Caco-2 (cell line): ENCODE measurements at regions of chr22 and their contacts with region 1.

Region 1: GRCh38 chr22:35840302-35840739 is 122.6 kb downstream of the APOL5 start:
- DNase-seq: peak; percentile 88 to 95
- H3K4me3 ChIP-seq: peak overlapping the region; percentile 50
- H3K4me3 Mint-ChIP-seq: peak overlapping the region; percentile 90
- H3K27ac Mint-ChIP-seq: peak overlapping the region; percentile 81
- H3K4me1 ChIP-seq: peaks cover 32% of the 10 kb centered on the region
- H3K4me1 Mint-ChIP-seq: peaks cover 34% of the 10 kb centered on the region
- H3K27me3 ChIP-seq: no peaks in the 10 kb centered on the region
- H3K27me3 Mint-ChIP-seq: no peaks in the 10 kb centered on the region
- CTCF ChIP-seq: no peak

Region 2: GRCh38 chr22:35761037-35761436 is 79.3 kb before region 1 on chr22:
- CTCF ChIA-PET with region 1: no interaction called
- POLR2A ChIA-PET with region 1: no interaction called
- intact Hi-C with region 1: loop called (anchors 5 kb)
- DNase-seq: peak in 1 of 2 experiments; percentile 14
- H3K4me3 ChIP-seq: no peak overlapping the region
- H3K4me3 Mint-ChIP-seq: no peak overlapping the region
- H3K27ac Mint-ChIP-seq: no peak overlapping the region
- H3K4me1 ChIP-seq: no peaks in the 10 kb centered on the region
- H3K4me1 Mint-ChIP-seq: peaks cover 6% of the 10 kb centered on the region
- H3K27me3 ChIP-seq: no peaks in the 10 kb centered on the region
- H3K27me3 Mint-ChIP-seq: no peaks in the 10 kb centered on the region
- CTCF ChIP-seq: peak in 1 of 2 experiments; percentile 49

Region 3: DNA sequence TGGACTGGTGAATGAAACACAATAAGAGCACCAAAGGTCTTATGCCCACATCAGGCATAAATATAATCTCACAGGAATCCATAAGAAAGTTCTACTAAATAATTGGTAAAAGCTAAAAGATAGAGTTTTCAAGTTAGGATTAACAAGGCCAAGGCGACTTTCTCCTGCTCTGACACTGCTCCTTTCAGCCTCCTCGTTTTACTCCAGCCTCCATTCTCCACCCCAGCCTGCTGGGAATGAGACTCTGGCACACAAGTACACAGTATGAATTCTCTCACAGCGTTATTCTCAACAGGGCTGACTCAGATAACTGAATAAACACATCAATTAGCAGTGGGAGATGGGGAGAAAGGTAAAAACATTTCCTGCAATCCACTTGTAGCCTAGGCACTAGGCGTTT is 27.7 kb before region 1 on chr22:
- CTCF ChIA-PET with region 1: no interaction called
- POLR2A ChIA-PET with region 1: no interaction called
- intact Hi-C with region 1: no loop called
- DNase-seq: no peak
- H3K4me3 ChIP-seq: no peak overlapping the region
- H3K4me3 Mint-ChIP-seq: no peak overlapping the region
- H3K27ac Mint-ChIP-seq: no peak overlapping the region
- H3K4me1 ChIP-seq: 0 out of 2 replicates have a peak, but pooled peaks cover 6% of the 10 kb centered on the region
- H3K4me1 Mint-ChIP-seq: peaks cover 19% of the 10 kb centered on the region
- H3K27me3 ChIP-seq: no peaks in the 10 kb centered on the region
- H3K27me3 Mint-ChIP-seq: no peaks in the 10 kb centered on the region
- CTCF ChIP-seq: no peak

Region 4: GRCh38 chr22:35887296-35887875 is 47.1 kb after region 1 on chr22:
- CTCF ChIA-PET with region 1: no interaction called
- POLR2A ChIA-PET with region 1: no interaction called
- intact Hi-C with region 1: loop called (anchors 5 kb)
- DNase-seq: peak; percentile 59 to 62
- H3K4me3 ChIP-seq: no peak overlapping the region
- H3K4me3 Mint-ChIP-seq: peak overlapping the region; percentile 35
- H3K27ac Mint-ChIP-seq: peak overlapping the region; percentile 70
- H3K4me1 ChIP-seq: peaks cover 59% of the 10 kb centered on the region
- H3K4me1 Mint-ChIP-seq: peaks cover 45% of the 10 kb centered on the region
- H3K27me3 ChIP-seq: no peaks in the 10 kb centered on the region
- H3K27me3 Mint-ChIP-seq: no peaks in the 10 kb centered on the region
- CTCF ChIP-seq: no peak

Region 5: DNA sequence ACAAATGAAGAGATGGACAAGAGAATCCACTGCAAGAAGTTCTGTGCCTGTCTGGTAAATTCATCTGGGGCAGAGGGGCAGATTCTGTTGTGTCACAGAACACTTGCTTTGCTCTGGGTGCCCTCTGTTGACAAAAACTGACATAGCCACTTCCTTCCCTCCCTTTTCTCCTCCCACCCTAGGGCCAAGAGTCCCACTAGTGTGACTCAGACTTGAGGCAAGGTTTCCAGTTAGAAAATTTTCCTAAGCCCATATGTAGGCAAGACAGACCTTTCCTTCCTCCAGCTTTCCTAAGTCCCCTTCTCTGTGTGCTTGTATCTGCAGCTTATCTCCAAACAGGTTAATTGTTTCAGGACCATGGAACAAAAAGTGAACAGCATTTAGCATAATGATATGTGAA is 81.5 kb after region 1 on chr22:
- CTCF ChIA-PET with region 1: no interaction called
- POLR2A ChIA-PET with region 1: no interaction called
- intact Hi-C with region 1: loop called (anchors 1 kb)
- DNase-seq: peak; percentile 76 to 77
- H3K4me3 ChIP-seq: no peak overlapping the region
- H3K4me3 Mint-ChIP-seq: no peak overlapping the region
- H3K27ac Mint-ChIP-seq: no peak overlapping the region
- H3K4me1 ChIP-seq: peaks cover 24% of the 10 kb centered on the region
- H3K4me1 Mint-ChIP-seq: peaks cover 33% of the 10 kb centered on the region
- H3K27me3 ChIP-seq: no peaks in the 10 kb centered on the region
- H3K27me3 Mint-ChIP-seq: no peaks in the 10 kb centered on the region
- CTCF ChIP-seq: peak; percentile 49 to 69

Region 6: GRCh38 chr22:35947794-35948425 is 107.6 kb after region 1 on chr22:
- CTCF ChIA-PET with region 1: no interaction called
- POLR2A ChIA-PET with region 1: no interaction called
- intact Hi-C with region 1: no loop called
- DNase-seq: no peak
- H3K4me3 ChIP-seq: no peak overlapping the region
- H3K4me3 Mint-ChIP-seq: no peak overlapping the region
- H3K27ac Mint-ChIP-seq: no peak overlapping the region
- H3K4me1 ChIP-seq: peaks cover 7% of the 10 kb centered on the region
- H3K4me1 Mint-ChIP-seq: peaks cover 6% of the 10 kb centered on the region
- H3K27me3 ChIP-seq: no peaks in the 10 kb centered on the region
- H3K27me3 Mint-ChIP-seq: no peaks in the 10 kb centered on the region
- CTCF ChIP-seq: no peak